MCF 10A (cell line): ENCODE measurements at regions of chr3 and their contacts with region 1.

Region 1: GRCh38 chr3:189588070-189588820 is 42.9 kb upstream of the TP63 start:
- DNase-seq: peak; percentile 92
- H3K4me3 Mint-ChIP-seq: peak overlapping the region; percentile 60
- H3K27ac Mint-ChIP-seq: peak overlapping the region; percentile 84
- H3K4me1 Mint-ChIP-seq: peaks cover 48% of the 10 kb centered on the region
- H3K27me3 Mint-ChIP-seq: no peaks in the 10 kb centered on the region
- CTCF ChIP-seq: no peak

Region 2: GRCh38 chr3:189276481-189277219 is 311.6 kb before region 1 on chr3:
- CTCF ChIA-PET with region 1: interaction called, 9 read pairs
- POLR2A ChIA-PET with region 1: interaction called, 90 read pairs
- intact Hi-C with region 1: no loop called
- DNase-seq: peak; percentile 95
- H3K4me3 Mint-ChIP-seq: peak overlapping the region; percentile 30
- H3K27ac Mint-ChIP-seq: peak overlapping the region; percentile 50
- H3K4me1 Mint-ChIP-seq: peaks cover 41% of the 10 kb centered on the region
- H3K27me3 Mint-ChIP-seq: no peaks in the 10 kb centered on the region
- CTCF ChIP-seq: no peak

Region 3: DNA sequence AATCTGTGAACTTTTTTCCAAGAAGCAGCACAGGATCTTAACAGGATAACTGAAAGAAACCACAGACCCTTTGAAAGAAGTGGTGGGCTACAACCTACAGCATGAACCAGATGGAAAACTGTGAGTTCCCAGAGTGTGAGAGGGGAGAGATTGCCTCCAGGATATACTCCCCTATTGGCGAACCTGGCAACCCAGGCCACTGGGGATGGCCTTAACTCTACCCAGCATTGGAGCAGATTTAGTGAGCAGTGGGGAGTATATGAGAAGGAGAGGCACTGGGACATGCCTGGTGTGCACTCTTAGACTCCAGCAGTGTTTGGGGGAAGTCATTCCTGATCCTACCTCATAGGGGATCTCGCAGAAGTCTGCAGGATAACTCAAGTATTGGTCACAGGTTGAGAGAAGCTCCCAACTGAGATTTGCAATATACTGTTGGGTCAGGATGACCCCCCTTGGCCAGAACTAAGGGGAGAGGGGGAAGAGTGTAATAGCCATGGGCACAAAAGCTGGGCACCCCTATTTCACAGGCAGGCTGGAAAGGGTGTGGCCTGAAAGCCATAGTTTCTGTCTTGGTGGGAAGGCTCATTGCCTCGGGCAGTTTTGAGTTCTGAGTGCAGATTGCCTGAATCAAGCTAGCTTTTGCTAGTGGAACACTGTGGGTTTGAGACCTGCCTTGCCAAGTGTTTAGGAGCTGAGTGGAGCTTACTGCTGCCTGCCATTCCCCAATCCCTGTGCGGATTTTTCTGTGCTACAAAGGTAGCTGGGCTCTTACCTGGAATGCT is 157.9 kb before region 1 on chr3:
- CTCF ChIA-PET with region 1: no interaction called
- POLR2A ChIA-PET with region 1: no interaction called
- intact Hi-C with region 1: no loop called
- DNase-seq: peak; percentile 3
- H3K4me3 Mint-ChIP-seq: no peak overlapping the region
- H3K27ac Mint-ChIP-seq: no peak overlapping the region
- H3K4me1 Mint-ChIP-seq: peaks cover 13% of the 10 kb centered on the region
- H3K27me3 Mint-ChIP-seq: no peaks in the 10 kb centered on the region
- CTCF ChIP-seq: no peak

Region 4: GRCh38 chr3:189652042-189652441 is 63.8 kb after region 1 on chr3:
- CTCF ChIA-PET with region 1: no interaction called
- POLR2A ChIA-PET with region 1: no interaction called
- intact Hi-C with region 1: no loop called
- DNase-seq: peak; percentile 24
- H3K4me3 Mint-ChIP-seq: no peak overlapping the region
- H3K27ac Mint-ChIP-seq: no peak overlapping the region
- H3K4me1 Mint-ChIP-seq: no peaks in the 10 kb centered on the region
- H3K27me3 Mint-ChIP-seq: no peaks in the 10 kb centered on the region
- CTCF ChIP-seq: peak; percentile 35

Region 5: DNA sequence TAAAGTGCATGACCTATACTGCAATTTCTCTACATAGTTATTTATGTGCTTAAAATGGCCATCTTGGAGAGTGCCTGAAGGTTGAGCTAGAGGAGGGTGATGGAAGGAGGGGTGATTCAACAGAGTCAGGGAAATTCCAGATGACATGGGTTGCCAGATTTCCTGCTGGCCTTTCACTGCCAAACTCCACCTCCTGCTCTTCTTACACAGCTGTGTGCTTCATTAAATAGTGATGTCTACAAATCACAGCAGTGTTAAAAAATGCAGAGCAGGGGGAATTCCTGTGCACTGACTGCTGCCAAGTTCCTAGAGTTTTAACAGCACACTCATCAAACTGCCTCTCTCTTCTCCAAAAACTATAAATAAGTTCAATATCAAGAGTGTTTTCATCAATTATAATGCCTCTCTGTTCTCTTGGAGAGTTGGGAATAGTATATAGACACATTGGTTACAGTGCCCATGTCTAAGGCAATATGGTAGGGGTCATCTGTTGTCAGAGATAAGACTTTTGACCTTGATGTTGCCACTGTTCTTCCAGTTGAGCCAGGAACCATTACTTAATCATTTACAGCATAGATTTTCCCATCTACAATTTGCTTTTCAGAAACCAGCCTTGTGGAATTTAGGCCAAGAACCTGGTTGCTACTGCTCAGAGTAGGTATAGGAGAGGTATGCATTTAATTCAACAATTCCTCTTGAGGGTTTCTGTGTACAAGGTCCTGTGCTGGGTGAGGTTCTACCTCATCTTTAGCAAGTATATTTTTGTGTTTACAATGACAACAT is 122.6 kb after region 1 on chr3:
- CTCF ChIA-PET with region 1: no interaction called
- POLR2A ChIA-PET with region 1: interaction called, 10 read pairs
- intact Hi-C with region 1: no loop called
- DNase-seq: peak; percentile 95
- H3K4me3 Mint-ChIP-seq: no peak overlapping the region
- H3K27ac Mint-ChIP-seq: peak overlapping the region; percentile 35
- H3K4me1 Mint-ChIP-seq: peaks cover 31% of the 10 kb centered on the region
- H3K27me3 Mint-ChIP-seq: no peaks in the 10 kb centered on the region
- CTCF ChIP-seq: no peak

Region 6: GRCh38 chr3:189799366-189799765 is 211.1 kb after region 1 on chr3:
- CTCF ChIA-PET with region 1: interaction called, 3 read pairs
- POLR2A ChIA-PET with region 1: interaction called, 17 read pairs
- intact Hi-C with region 1: no loop called
- DNase-seq: no peak
- H3K4me3 Mint-ChIP-seq: no peak overlapping the region
- H3K27ac Mint-ChIP-seq: peak overlapping the region; percentile 6
- H3K4me1 Mint-ChIP-seq: peaks cover 24% of the 10 kb centered on the region
- H3K27me3 Mint-ChIP-seq: no peaks in the 10 kb centered on the region
- CTCF ChIP-seq: no peak

Region 7: DNA sequence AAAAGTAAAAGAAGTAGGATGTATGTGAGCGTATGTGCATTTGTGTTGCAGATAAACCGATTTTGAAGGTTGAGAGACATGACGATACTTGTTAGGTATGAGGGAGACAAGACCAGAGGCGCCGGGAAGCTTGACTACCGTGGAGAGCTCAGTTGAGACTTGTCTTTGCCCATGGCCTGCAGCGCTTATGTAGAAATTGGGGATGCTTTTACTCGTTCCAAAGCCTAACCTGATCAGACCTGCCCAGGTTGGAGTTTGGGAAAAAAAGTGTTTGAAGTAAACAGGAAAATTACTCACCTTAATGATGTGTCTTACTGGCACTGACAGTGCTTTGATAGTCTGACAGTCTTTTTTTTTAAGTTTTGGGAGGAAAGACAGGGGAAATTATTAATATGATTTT is 245.8 kb after region 1 on chr3:
- CTCF ChIA-PET with region 1: interaction called, 5 read pairs
- POLR2A ChIA-PET with region 1: interaction called, 12 read pairs
- intact Hi-C with region 1: loop called (anchors 1 kb)
- DNase-seq: peak; percentile 99
- H3K4me3 Mint-ChIP-seq: peak overlapping the region; percentile 26
- H3K27ac Mint-ChIP-seq: peak overlapping the region; percentile 37
- H3K4me1 Mint-ChIP-seq: peaks cover 41% of the 10 kb centered on the region
- H3K27me3 Mint-ChIP-seq: no peaks in the 10 kb centered on the region
- CTCF ChIP-seq: no peak